Mammary epithelial cell (primary cell): ENCODE measurements at regions of chr6 and their contacts with region 1.

Region 1: GRCh38 chr6:38702558-38703397 is at the start of gene GLO1:
- DNase-seq: peak; percentile 98
- H3K4me3 ChIP-seq: peak within 1 kb of the TSS; percentile 60 to 83 (median 68)
- H3K27ac ChIP-seq: peak within 1 kb of the TSS; percentile 78
- H3K4me1 ChIP-seq: no peaks in the 10 kb centered on the region
- H3K27me3 ChIP-seq: no peaks in the 10 kb centered on the region
- CTCF ChIP-seq: no peak
- total RNA-seq, gene GLO1: 134 to 150 TPM

Region 2: DNA sequence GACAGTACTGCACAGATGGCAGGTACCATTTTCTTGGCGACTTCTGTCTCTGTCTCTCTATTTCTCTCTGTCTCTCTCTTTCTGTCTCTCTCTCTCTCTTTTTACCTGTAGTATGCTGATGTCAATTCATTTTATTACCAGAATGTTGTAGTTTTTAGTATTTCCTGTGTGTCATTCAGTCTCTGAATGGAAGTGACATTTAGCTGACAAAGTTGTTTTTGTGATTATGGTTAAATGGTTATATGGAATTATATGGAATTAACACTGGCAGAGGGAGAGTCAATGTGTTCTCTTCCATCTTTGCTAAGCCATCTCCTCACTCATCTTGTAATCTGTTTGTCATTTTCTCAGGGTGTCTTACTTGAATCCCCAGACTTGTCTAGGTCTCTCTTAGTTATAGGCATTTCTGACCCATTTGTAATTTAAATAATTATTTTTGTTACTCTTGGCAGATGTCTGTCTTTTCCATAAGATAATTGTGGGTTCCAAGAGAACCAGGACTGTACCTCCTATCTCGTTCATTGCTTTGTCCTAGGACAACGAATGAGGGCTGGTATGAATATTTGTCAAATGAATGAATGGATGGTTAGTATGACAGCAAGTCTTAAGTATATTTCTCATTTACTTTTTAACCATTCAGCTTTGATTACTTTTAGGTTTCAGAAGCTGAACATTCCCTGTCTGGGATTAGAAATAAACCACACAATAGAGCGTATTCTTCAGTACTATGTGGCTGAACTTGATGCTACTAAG is 76.7 kb after region 1 on chr6:
- CTCF ChIA-PET with region 1: interaction called, 12 read pairs
- dilution Hi-C with region 1: no loop called
- in situ Hi-C with region 1: no loop called
- intact Hi-C with region 1: no loop called
- DNase-seq: no peak
- H3K4me3 ChIP-seq: no peak overlapping the region
- H3K27ac ChIP-seq: no peak overlapping the region
- H3K4me1 ChIP-seq: peaks cover 4% of the 10 kb centered on the region
- H3K27me3 ChIP-seq: no peaks in the 10 kb centered on the region
- CTCF ChIP-seq: no peak

Region 3: GRCh38 chr6:38806271-38806670 is 103.5 kb after region 1 on chr6:
- CTCF ChIA-PET with region 1: no interaction called
- dilution Hi-C with region 1: no loop called
- in situ Hi-C with region 1: no loop called
- intact Hi-C with region 1: no loop called
- DNase-seq: no peak
- H3K4me3 ChIP-seq: no peak overlapping the region
- H3K27ac ChIP-seq: no peak overlapping the region
- H3K4me1 ChIP-seq: no peaks in the 10 kb centered on the region
- H3K27me3 ChIP-seq: no peaks in the 10 kb centered on the region
- CTCF ChIP-seq: no peak

Region 4: DNA sequence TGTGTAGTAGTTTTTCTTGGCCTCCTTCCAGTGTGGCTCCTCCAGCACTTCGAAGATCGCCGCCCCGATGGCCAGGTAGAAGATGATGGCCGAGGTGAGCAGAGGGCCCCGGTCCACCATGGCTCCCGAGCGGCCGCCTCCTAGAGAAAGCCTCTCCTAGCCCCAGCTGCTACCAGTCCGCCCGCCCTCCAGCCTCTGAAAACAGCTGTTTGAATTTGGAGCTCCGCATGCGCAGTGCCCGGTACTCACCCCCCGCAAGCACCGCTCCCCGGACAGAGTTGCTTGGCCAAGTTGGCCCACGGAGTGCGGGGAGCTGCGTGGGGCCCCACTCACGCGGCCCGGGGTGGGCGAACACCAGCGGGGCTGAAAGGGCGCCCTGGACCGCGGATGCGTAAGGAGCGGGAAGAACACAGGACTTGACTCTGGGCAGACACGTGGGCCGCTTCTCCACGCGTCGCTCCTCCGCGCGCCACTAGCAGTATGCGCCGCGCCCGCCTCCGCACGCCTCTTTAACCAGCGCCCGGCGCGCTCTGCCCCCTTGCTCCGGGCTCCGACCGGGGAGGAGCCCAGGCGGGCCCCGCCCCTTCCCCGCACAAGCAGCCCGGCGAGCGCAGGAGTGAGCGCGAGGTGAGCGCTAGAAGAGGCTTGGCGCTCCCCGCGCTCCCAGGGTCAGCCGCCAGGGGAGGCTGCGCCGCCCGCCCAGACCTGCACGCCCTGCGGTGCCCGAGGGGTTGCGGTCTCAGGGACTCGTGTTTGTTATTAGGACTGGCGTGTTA is 526.4 kb after region 1 on chr6 and contains the start of gene KCNK5:
- CTCF ChIA-PET with region 1: interaction called, 10 read pairs
- dilution Hi-C with region 1: no loop called
- in situ Hi-C with region 1: no loop called
- intact Hi-C with region 1: no loop called
- DNase-seq: peak; percentile 44
- H3K4me3 ChIP-seq: peak within 1 kb of the TSS; percentile 42 to 50 (median 49)
- H3K27ac ChIP-seq: no peak within 1 kb of the TSS
- H3K4me1 ChIP-seq: peaks cover 12% of the 10 kb centered on the region
- H3K27me3 ChIP-seq: no peaks in the 10 kb centered on the region
- CTCF ChIP-seq: peak; percentile 39 to 65
- total RNA-seq, gene KCNK5: 1.3 TPM in 1 of 2 donors, not detected in the other